Activated T-helper 1 cell treated with anti-CD3 and anti-CD28 coated beads, Interleukin-12 subunit alpha, Interleukin-12 subunit beta, Interleukin-2, Interleukin-4 antibody, amounts not matched to agents 30 ng/mL and 10 ng/mL and 1 ng/mL, durations not matched to agents 14 hours and 24 hours and 36 hours (primary cell): ENCODE measurements at regions of chr15 and their contacts with region 1.

Region 1: DNA sequence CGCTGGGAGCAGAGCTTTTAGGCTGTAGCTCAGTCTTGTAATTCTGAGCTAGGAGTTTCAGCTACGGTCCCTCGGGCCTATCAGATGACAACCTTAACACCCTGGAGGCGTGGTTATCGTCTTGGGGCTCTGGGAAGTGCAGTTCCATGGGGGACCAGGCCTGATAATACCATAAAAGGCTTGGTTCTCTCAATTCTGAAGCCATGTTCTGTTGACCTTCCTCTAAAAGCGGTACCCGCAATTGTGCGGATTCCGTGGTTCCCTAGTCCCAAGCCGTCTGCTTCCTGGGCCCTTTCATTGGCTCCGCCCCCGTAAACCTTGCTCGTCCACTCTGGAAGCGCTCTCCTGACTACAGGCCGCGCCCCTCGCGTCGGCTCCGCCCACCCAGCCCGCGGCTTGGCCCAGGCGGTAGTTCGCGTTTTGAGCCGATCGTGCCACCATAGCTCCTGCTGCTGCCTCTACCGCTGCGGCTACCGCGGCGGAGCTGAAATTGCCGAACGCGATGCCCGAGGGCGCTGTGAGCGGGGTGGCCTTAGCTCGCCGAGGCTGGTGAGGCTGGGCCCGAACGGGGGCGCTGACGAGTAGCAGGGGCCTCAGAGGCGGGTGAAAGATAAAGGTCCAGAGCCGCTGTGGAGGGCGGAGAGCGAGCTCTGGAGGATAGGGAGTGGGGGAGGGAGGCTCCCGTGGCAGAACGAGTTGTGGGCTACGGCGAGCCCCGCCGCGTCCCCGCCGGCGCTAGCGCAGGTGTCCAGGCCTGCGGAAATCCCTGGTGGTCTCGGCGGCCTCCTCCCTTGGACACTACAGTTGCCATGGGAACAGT is at the start of gene MAPKBP1:
- DNase-seq: peak; percentile 98
- H3K4me3 Mint-ChIP-seq: peak within 1 kb of the TSS; percentile 93
- H3K27ac Mint-ChIP-seq: peak within 1 kb of the TSS; percentile 92
- H3K4me1 Mint-ChIP-seq: peaks cover 59% of the 10 kb centered on the region
- H3K27me3 Mint-ChIP-seq: no peaks in the 10 kb centered on the region
- total RNA-seq, gene MAPKBP1: 26.3 and 28.2 TPM in 2 replicates

Region 2: GRCh38 chr15:41331833-41332787 is 442.2 kb before region 1 on chr15 and contains the start of gene OIP5:
- intact Hi-C with region 1: loop called (anchors 5 kb)
- DNase-seq: peak; percentile 98
- H3K4me3 Mint-ChIP-seq: peak within 1 kb of the TSS; percentile 94
- H3K27ac Mint-ChIP-seq: peak within 1 kb of the TSS; percentile 95
- H3K4me1 Mint-ChIP-seq: peaks cover 33% of the 10 kb centered on the region
- H3K27me3 Mint-ChIP-seq: no peaks in the 10 kb centered on the region
- total RNA-seq, gene OIP5: 15.6 and 17.6 TPM in 2 replicates

Region 3: DNA sequence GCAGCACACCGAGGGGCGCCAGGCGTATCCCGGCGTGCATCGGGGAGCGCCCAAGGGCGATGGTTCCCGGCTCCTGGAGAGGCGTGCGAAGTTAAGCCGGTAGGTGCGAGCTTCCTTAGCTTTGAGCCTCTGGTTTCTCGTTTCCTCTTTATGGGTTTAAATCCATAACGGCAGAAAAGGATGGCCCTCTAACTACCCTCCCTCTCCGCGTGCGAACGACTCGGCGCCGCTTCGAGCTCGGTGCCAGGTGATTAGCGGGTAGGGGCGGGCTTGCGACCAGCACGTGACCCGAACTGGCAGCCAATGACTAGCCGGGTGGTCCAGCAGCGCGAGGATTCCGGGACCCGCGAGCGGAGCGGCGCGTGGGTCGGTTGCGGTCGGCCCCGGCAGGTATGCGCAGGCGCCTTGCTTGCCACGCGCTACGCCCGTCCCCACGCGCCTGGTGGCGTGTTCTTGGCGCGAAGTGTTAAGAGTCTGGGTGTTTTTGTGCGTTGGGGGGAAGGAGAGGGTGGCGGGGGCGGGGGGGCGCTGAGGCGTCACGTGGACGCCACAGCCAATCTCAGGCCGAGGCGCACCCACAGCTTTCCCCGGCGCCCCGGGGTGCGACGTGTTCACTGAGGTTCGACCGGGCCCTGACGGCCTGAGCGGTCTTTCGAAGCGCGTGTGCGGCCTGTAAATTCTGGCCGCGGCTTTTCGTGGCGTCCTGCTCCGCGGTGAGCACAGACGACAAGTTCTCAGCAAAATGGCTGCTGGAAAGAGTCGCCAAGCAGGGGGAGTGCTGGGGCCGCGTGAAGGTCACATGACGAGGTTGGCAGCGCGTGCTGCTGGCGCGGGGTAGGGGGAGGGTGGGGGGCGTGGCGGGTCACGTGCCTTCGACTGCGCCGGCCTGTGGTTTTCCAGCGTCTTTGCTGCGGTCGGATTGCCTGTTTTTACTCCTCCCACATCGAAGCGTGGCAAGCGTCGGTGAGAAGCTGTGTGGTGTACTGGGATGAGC is 152.8 kb before region 1 on chr15:
- intact Hi-C with region 1: loop called (anchors 5 kb)
- DNase-seq: peak; percentile 70
- H3K4me3 Mint-ChIP-seq: peak overlapping the region; percentile 78
- H3K27ac Mint-ChIP-seq: peak overlapping the region; percentile 81
- H3K4me1 Mint-ChIP-seq: peaks cover 12% of the 10 kb centered on the region
- H3K27me3 Mint-ChIP-seq: peaks cover 22% of the 10 kb centered on the region

Region 4: DNA sequence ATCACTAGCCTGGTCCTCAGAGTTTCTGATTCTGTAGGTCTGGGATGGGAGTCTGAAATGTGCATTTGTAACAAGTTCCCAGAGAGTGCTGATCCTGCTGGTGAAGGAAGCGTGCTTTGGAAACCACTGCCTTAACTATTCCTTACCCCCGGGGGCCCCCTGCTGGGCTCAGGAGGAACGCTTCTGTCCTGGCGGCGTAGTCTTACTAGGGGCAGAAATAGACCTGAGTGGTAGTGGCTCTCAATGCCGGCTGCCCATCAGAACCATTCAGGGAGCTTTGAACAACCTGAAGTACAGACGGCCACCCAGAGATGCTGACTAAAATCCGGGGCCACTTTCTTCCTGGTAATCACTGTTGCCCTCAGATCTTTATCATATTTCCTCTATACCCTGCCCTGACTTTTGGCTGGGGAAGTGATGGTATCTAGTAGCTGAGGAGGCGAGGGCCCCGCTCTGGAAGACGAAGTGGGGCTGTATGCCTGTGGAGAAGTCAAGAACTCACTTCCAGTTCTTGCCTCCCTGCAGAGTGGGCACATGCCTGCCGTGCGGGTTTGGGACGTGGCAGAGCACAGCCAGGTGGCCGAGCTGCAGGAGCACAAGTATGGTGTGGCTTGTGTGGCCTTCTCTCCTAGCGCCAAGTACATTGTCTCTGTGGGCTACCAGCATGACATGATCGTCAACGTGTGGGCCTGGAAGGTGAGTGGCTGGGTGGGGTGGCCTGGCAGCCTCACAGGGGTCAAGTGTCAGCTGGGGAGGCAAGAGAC is 37.3 kb after region 1 on chr15:
- intact Hi-C with region 1: loop called (anchors 1 kb)
- DNase-seq: peak; percentile 61
- H3K4me3 Mint-ChIP-seq: no peak overlapping the region
- H3K27ac Mint-ChIP-seq: no peak overlapping the region
- H3K4me1 Mint-ChIP-seq: peaks cover 24% of the 10 kb centered on the region
- H3K27me3 Mint-ChIP-seq: no peaks in the 10 kb centered on the region

Region 5: GRCh38 chr15:41936649-41937567 is 162.6 kb after region 1 on chr15:
- intact Hi-C with region 1: loop called (anchors 1 kb)
- DNase-seq: peak; percentile 78
- H3K4me3 Mint-ChIP-seq: peak overlapping the region; percentile 73
- H3K27ac Mint-ChIP-seq: peak overlapping the region; percentile 100
- H3K4me1 Mint-ChIP-seq: peaks cover 78% of the 10 kb centered on the region
- H3K27me3 Mint-ChIP-seq: no peaks in the 10 kb centered on the region

Region 6: GRCh38 chr15:42273102-42273899 is 499.0 kb after region 1 on chr15 and contains the starts of genes GANC and TMEM87A:
- intact Hi-C with region 1: loop called (anchors 5 kb)
- DNase-seq: peak; percentile 95
- H3K4me3 Mint-ChIP-seq: peak within 1 kb of the TSS; percentile 99
- H3K27ac Mint-ChIP-seq: peak within 1 kb of the TSS; percentile 98
- H3K4me1 Mint-ChIP-seq: peaks cover 47% of the 10 kb centered on the region
- H3K27me3 Mint-ChIP-seq: no peaks in the 10 kb centered on the region
- total RNA-seq, gene GANC: 13.0 and 15.2 TPM in 2 replicates
- total RNA-seq, gene TMEM87A: 42.3 and 46.2 TPM in 2 replicates